Lower leg skin (tissue), 4 donors: ENCODE measurements at regions of chr1 and their contacts with region 1.

Region 1: GRCh38 chr1:214587159-214587558 is 15.8 kb upstream of the CENPF start:
- DNase-seq: no peak
- H3K4me3 ChIP-seq: no peak overlapping the region
- CTCF ChIP-seq: no peak
- POLR2A ChIP-seq: no peak

Region 2: DNA sequence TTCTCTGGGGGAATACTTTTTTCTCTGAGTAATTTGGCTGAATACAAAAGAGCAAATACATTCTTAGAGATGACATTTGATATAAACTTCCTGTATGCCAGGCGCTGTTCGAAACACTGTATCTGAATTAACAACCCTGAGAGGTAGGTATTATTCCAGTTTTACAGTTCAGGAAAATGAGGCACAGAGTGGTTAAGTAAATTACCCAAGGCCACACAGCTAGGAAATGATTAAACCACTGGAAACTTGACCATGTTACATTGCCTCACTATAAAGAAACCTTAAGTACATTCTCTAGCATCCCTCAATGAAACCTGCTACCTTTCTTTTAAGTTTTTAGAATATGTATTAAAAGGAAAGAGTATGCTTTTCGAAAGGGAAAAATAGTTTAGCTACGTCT is 251.6 kb before region 1 on chr1:
- intact Hi-C with region 1: loop called (anchors 2 kb)
- DNase-seq: no peak
- H3K4me3 ChIP-seq: no peak overlapping the region
- CTCF ChIP-seq: no peak
- POLR2A ChIP-seq: no peak